Mammary epithelial cell (primary cell): ENCODE measurements at regions of chr1 and their contacts with region 1.

Region 1: GRCh38 chr1:38026592-38027200 is 14.2 kb downstream of the UTP11 start:
- DNase-seq: peak; percentile 73
- H3K4me3 ChIP-seq: peak overlapping the region in 2 of 3 experiments; percentile 1 to 12
- H3K27ac ChIP-seq: peak overlapping the region; percentile 19
- H3K4me1 ChIP-seq: peaks cover 65% of the 10 kb centered on the region
- H3K27me3 ChIP-seq: no peaks in the 10 kb centered on the region
- CTCF ChIP-seq: peak; percentile 85 to 95

Region 2: GRCh38 chr1:38114241-38115026 is 87.7 kb after region 1 on chr1:
- CTCF ChIA-PET with region 1: no interaction called
- dilution Hi-C with region 1: no loop called
- in situ Hi-C with region 1: no loop called
- intact Hi-C with region 1: loop called (anchors 5 kb)
- DNase-seq: no peak
- H3K4me3 ChIP-seq: no peak overlapping the region
- H3K27ac ChIP-seq: no peak overlapping the region
- H3K4me1 ChIP-seq: peaks cover 18% of the 10 kb centered on the region
- H3K27me3 ChIP-seq: no peaks in the 10 kb centered on the region
- CTCF ChIP-seq: no peak

Region 3: GRCh38 chr1:38152351-38153065 is 125.8 kb after region 1 on chr1:
- CTCF ChIA-PET with region 1: no interaction called
- dilution Hi-C with region 1: no loop called
- in situ Hi-C with region 1: no loop called
- intact Hi-C with region 1: loop called (anchors 1 kb)
- DNase-seq: peak; percentile 36
- H3K4me3 ChIP-seq: no peak overlapping the region
- H3K27ac ChIP-seq: no peak overlapping the region
- H3K4me1 ChIP-seq: no peaks in the 10 kb centered on the region
- H3K27me3 ChIP-seq: no peaks in the 10 kb centered on the region
- CTCF ChIP-seq: peak; percentile 38 to 59

Region 4: GRCh38 chr1:38500352-38500751 is 473.7 kb after region 1 on chr1:
- CTCF ChIA-PET with region 1: no interaction called
- dilution Hi-C with region 1: no loop called
- in situ Hi-C with region 1: no loop called
- intact Hi-C with region 1: loop called (anchors 10 kb)
- DNase-seq: no peak
- H3K4me3 ChIP-seq: no peak overlapping the region
- H3K27ac ChIP-seq: no peak overlapping the region
- H3K4me1 ChIP-seq: no peaks in the 10 kb centered on the region
- H3K27me3 ChIP-seq: no peaks in the 10 kb centered on the region
- CTCF ChIP-seq: peak; percentile 48 to 60

Region 5: DNA sequence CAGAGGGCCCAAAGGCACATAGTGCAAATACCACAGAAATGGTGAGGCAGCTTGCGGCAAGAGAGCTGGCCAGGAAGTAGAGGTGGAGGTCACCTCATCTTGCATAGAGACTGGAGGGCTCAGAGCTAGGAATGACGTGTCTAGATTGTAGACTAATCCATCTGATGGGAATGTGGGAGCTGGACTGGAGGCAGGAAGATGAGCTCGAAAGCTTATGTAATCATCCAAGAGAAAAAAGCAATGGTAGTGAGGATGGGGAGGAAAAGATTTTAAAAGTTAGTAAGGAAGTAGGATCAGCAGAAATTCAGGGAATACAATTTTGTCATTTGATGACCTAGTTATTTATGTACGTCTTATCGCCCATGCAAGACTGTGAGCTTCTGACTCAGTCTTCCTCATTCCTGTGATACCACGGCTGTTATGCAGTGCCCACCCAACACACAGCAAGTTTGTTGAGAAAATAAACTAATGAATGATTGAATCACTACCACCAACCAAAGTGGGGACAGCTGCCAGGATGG is 709.0 kb after region 1 on chr1:
- CTCF ChIA-PET with region 1: interaction called, 3 read pairs
- dilution Hi-C with region 1: no loop called
- in situ Hi-C with region 1: no loop called
- intact Hi-C with region 1: loop called (anchors 5 kb)
- DNase-seq: peak; percentile 41
- H3K4me3 ChIP-seq: no peak overlapping the region
- H3K27ac ChIP-seq: no peak overlapping the region
- H3K4me1 ChIP-seq: peaks cover 8% of the 10 kb centered on the region
- H3K27me3 ChIP-seq: no peaks in the 10 kb centered on the region
- CTCF ChIP-seq: no peak

Region 6: DNA sequence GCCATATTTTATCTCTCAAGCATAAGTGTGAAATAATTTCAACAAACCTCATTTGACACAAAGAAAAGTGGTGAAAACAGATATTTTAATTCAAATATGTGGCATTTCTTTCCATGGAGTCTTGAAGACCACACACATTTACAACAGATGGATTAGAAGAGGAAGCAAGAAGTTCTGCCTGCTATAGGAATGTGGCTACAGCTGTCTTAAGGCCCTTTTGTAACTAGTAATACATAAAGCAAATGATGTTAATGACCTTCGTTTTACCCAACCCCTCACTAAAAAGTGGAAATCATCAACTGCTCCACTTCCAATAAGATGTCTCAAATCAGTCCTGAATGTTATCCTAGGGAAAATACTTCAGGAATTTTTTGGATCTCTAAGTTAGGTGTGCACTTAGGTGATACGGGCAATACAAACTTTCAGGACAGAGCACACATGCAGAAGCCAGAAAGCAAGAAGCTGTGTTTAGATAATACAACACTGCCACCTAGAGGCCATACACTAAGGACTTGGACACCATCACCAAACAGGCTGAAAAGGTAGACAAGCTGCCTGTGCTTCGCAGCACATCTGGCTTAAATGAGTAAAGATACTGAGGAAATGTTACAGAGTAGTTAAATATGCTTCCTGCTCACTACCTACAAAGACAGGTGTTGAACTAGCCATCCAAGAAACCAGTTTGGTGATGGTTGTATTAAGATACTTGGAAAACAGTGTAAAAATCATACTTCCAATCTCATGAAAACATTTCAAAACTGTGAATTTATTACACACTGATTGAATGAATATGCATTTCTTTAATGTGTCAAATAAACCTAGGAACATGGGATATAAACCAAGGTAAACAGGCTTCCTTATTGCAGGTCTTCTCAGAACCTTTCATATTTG is 808.5 kb after region 1 on chr1:
- CTCF ChIA-PET with region 1: no interaction called
- dilution Hi-C with region 1: no loop called
- in situ Hi-C with region 1: loop called in 1 of 2 experiments (anchors 5 kb)
- intact Hi-C with region 1: loop called (anchors 1 kb)
- DNase-seq: peak; percentile 75
- H3K4me3 ChIP-seq: no peak overlapping the region
- H3K27ac ChIP-seq: no peak overlapping the region
- H3K4me1 ChIP-seq: peaks cover 4% of the 10 kb centered on the region
- H3K27me3 ChIP-seq: no peaks in the 10 kb centered on the region
- CTCF ChIP-seq: peak; percentile 74 to 75